ENCODE measurements at regions of chr1 and their contacts with region 1.

Region 1: GRCh38 chr1:167542109-167543032 is 11.2 kb downstream of the CREG1 start:
- DNase-seq: no peak
- H3K4me3 ChIP-seq: no peak overlapping the region
- H3K27ac ChIP-seq: no peak overlapping the region
- H3K4me1 ChIP-seq: peaks cover 0 to 4% (median 3%) of the 10 kb centered on the region in 4 experiments; a peak in 2 of 7 replicates
- H3K27me3 ChIP-seq: no peaks in the 10 kb centered on the region; a peak in 1 of 7 replicates
- CTCF ChIP-seq: no peak
- EP300 ChIP-seq: no peak
- POLR2A ChIP-seq: no peak
- RAD21 ChIP-seq: no peak

Region 2: DNA sequence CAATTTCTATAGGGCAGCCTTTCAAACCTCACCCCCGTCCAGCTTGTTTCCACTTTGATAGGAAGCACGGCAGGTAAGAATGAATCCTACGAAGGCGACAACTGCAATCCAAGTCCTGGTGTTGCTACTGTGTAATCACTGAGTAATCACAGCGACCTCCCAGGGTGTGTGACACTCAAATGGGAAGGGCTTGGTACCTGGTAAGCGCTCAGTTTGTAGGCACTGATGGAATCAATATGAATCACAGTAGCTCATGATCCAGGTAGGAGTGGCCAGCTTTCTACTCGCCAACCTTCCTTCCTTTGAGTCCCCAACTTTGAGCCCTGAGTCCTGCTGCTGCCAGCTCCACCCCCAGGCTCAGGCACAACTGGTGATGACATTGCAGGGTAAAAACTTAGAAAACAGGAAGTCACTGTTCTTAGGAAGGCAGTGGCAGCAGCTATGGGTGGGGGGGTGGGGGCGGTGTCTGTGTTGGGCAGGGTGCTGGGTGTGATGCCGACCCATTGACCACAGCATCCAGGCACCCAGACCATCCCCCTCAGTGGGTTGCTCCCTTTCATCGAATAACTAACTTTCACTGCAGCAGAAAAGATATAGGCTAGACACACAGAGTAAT is 94.7 kb before region 1 on chr1:
- CTCF ChIA-PET with region 1: interaction called, 53 read pairs
- POLR2A ChIA-PET with region 1: interaction called, 3 read pairs
- DNase-seq: no peak
- H3K4me3 ChIP-seq: no peak overlapping the region
- H3K27ac ChIP-seq: no peak overlapping the region
- H3K4me1 ChIP-seq: peaks cover 0 to 4% (median 2%) of the 10 kb centered on the region in 4 experiments; a peak in 5 of 7 replicates
- H3K27me3 ChIP-seq: no peaks in the 10 kb centered on the region; a peak in 1 of 7 replicates
- CTCF ChIP-seq: no peak
- EP300 ChIP-seq: no peak
- POLR2A ChIP-seq: no peak
- RAD21 ChIP-seq: no peak

Region 3: GRCh38 chr1:167499664-167500101 is 42.7 kb before region 1 on chr1:
- CTCF ChIA-PET with region 1: interaction called, 11 read pairs
- POLR2A ChIA-PET with region 1: no interaction called
- DNase-seq: no peak
- H3K4me3 ChIP-seq: no peak overlapping the region
- H3K27ac ChIP-seq: no peak overlapping the region
- H3K4me1 ChIP-seq: peaks cover 4 to 12% (median 9%) of the 10 kb centered on the region in 4 experiments; a peak in 5 of 7 replicates
- H3K27me3 ChIP-seq: peaks cover 0 to 2% (median 0%) of the 10 kb centered on the region in 4 experiments; a peak in 1 of 7 replicates
- CTCF ChIP-seq: no peak
- EP300 ChIP-seq: no peak
- POLR2A ChIP-seq: no peak
- RAD21 ChIP-seq: no peak

Region 4: DNA sequence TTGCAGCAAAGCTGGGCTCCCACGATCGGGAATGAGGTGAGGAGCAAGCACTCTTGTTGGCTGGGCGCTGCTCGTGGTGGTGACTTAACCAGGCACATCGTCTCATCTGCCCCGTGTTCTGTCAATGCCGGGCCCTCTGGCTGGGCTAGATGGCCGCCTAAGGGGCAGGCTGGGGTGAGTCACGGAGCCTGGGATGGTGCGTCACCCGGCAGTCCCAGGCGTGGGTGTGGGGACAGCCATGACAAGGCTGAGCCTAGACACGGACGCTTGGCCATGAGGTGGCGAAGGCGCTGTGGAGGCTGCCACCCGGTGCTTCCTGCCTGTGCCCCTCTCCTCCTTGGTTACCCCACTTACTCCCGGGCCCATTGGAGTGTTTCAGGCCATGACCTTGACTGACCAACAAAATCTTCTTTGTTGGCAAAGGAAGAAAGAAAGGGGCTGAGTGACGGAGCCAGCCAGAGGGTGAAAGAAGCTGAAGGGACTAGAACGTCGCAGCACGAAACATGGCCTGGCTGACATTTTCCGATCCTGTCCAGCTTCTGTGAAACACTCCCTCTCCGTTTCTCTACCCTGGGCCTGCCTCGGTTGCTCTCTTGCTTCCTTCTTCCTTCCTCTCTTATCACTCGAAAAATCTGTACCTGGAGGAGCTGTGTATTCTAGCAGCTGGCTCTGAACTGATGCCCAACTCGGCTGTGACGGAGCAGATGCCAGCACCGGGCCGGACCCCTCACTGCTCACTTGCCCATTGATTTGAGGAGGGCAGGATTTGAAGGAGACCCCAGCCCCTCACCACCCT is 24.6 kb before region 1 on chr1:
- CTCF ChIA-PET with region 1: interaction called, 12 read pairs
- POLR2A ChIA-PET with region 1: no interaction called
- DNase-seq: peak in 1 of 2 experiments; percentile 43
- H3K4me3 ChIP-seq: no peak overlapping the region
- H3K27ac ChIP-seq: no peak overlapping the region
- H3K4me1 ChIP-seq: no peaks in the 10 kb centered on the region
- H3K27me3 ChIP-seq: no peaks in the 10 kb centered on the region
- CTCF ChIP-seq: no peak
- EP300 ChIP-seq: no peak
- POLR2A ChIP-seq: no peak
- RAD21 ChIP-seq: no peak

Region 5: GRCh38 chr1:167528057-167528728 is 14.2 kb before region 1 on chr1:
- CTCF ChIA-PET with region 1: interaction called, 17 read pairs
- POLR2A ChIA-PET with region 1: no interaction called
- DNase-seq: no peak
- H3K4me3 ChIP-seq: no peak overlapping the region
- H3K27ac ChIP-seq: no peak overlapping the region
- H3K4me1 ChIP-seq: no peaks in the 10 kb centered on the region
- H3K27me3 ChIP-seq: 0 out of 7 replicates have a peak, but pooled peaks cover 0 to 3% (median 0%) of the 10 kb centered on the region in 4 experiments
- CTCF ChIP-seq: no peak
- EP300 ChIP-seq: no peak
- POLR2A ChIP-seq: no peak
- RAD21 ChIP-seq: no peak

Region 6: GRCh38 chr1:167553136-167554027 is 11.0 kb after region 1 on chr1 and contains the start of gene CREG1:
- CTCF ChIA-PET with region 1: interaction called, 70 read pairs
- POLR2A ChIA-PET with region 1: interaction called, 18 read pairs
- DNase-seq: peak; percentile 78 to 93
- H3K4me3 ChIP-seq: peak within 1 kb of the TSS; percentile 65 to 84 (median 70)
- H3K27ac ChIP-seq: 0 out of 2 replicates have a peak within 1 kb of the TSS, but pooled peaks have one; percentile 12
- H3K4me1 ChIP-seq: no peaks in the 10 kb centered on the region; a peak in 1 of 7 replicates
- H3K27me3 ChIP-seq: no peaks in the 10 kb centered on the region; a peak in 1 of 7 replicates
- CTCF ChIP-seq: no peak
- EP300 ChIP-seq: no peak
- POLR2A ChIP-seq: peak; percentile 84 to 94
- RAD21 ChIP-seq: no peak
- total RNA-seq, gene CREG1: 28.7 and 30.1 TPM in 2 replicates

Region 7: GRCh38 chr1:167563579-167564246 is 21.3 kb after region 1 on chr1:
- CTCF ChIA-PET with region 1: interaction called, 15 read pairs
- POLR2A ChIA-PET with region 1: no interaction called
- DNase-seq: no peak
- H3K4me3 ChIP-seq: no peak overlapping the region
- H3K27ac ChIP-seq: no peak overlapping the region
- H3K4me1 ChIP-seq: no peaks in the 10 kb centered on the region
- H3K27me3 ChIP-seq: no peaks in the 10 kb centered on the region
- CTCF ChIP-seq: no peak
- EP300 ChIP-seq: no peak
- POLR2A ChIP-seq: no peak
- RAD21 ChIP-seq: no peak

Measured in H1 (cell line).